Endothelial cell of umbilical vein (primary cell): ENCODE measurements at regions of chr5 and their contacts with region 1.

Region 1: DNA sequence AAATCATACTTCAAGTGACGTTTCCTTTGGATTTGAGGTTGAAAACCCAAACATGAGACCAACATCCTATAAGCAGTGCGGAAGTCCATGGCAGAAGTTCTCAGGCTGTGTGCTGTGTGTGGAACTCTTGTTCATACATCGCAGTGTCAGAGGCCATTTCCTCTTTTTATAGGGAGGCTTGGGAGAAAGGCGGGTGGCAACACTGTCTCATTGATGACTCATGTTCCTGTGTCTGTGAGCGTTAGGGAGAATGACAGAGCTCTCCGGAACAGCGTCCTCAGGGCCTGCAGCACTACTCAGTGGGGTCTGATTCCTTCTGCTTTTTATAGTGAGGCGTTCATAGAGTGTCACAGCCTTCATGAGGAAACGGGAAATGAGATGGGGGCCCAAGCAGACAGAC is 98.8 kb upstream of the BASP1 start:
- DNase-seq: peak; percentile 99
- H3K4me3 ChIP-seq: no peak overlapping the region
- H3K27ac ChIP-seq: peak overlapping the region; percentile 85
- H3K4me1 ChIP-seq: peaks cover 32% of the 10 kb centered on the region
- H3K27me3 ChIP-seq: no peaks in the 10 kb centered on the region
- CTCF ChIP-seq: no peak
- POLR2A ChIP-seq: peak; percentile 64

Region 2: DNA sequence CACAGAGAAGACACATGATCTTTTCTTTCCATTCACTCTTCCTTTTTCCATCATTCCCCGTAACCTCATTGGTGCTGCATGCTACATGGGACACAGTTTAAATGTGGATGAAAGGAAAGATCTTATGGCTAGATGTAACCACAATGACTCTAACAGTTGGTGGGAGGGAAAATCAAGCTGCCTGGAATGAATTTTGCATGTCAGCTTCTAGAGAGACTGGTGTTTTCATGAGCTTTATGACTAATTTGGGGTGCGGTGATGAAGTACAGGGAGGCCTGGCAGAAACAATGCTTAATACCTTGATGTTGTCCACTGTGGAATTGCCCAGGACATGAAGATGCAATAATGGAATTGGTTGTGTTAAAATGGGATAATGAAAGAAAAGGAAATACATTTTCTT is 126.6 kb before region 1 on chr5:
- CTCF ChIA-PET with region 1: no interaction called
- POLR2A ChIA-PET with region 1: no interaction called
- dilution Hi-C with region 1: no loop called
- intact Hi-C with region 1: loop called (anchors 1 kb)
- DNase-seq: peak; percentile 56
- H3K4me3 ChIP-seq: no peak overlapping the region
- H3K27ac ChIP-seq: peak overlapping the region; percentile 76
- H3K4me1 ChIP-seq: peaks cover 41% of the 10 kb centered on the region
- H3K27me3 ChIP-seq: no peaks in the 10 kb centered on the region
- CTCF ChIP-seq: no peak
- POLR2A ChIP-seq: no peak

Region 3: GRCh38 chr5:17037751-17038150 is 80.9 kb before region 1 on chr5:
- CTCF ChIA-PET with region 1: no interaction called
- POLR2A ChIA-PET with region 1: no interaction called
- dilution Hi-C with region 1: no loop called
- intact Hi-C with region 1: loop called (anchors 2 kb)
- DNase-seq: peak; percentile 85
- H3K4me3 ChIP-seq: no peak overlapping the region
- H3K27ac ChIP-seq: peak overlapping the region; percentile 81
- H3K4me1 ChIP-seq: peaks cover 19% of the 10 kb centered on the region
- H3K27me3 ChIP-seq: no peaks in the 10 kb centered on the region
- CTCF ChIP-seq: no peak
- POLR2A ChIP-seq: no peak

Region 4: DNA sequence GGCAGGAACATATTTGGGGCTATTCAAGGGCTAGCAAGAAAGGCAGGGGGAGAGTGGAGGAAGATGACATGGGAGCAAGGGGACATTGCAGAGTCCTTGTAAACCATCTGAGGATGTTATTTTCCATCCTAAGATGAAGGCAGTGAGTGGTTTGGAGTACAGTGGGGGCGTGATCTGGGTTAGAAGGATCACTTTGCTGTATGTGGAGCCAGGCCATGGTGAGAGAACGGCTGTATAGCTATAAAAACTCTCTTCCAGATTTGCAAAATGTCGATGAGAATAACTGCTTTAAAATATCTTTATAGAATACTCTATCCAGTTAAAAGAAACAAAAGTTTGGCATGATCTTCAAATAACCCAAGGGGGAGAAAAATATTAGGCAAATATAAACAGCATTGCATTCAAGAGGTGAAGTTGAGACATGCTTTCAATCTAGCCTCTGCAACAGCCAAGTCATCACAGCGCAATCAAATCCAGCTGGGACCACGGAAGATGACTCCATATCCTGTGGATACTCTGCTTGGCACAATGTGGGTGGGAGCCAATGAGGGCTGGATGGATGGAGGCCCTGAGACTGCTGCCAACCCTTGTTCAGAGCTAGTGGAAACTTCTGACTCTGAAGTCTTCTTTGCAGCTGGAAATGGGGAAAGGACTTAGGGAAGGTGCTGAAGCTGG is 12.8 kb before region 1 on chr5:
- CTCF ChIA-PET with region 1: interaction called, 7 read pairs
- POLR2A ChIA-PET with region 1: no interaction called
- dilution Hi-C with region 1: no loop called
- intact Hi-C with region 1: loop called (anchors 1 kb)
- DNase-seq: peak; percentile 82
- H3K4me3 ChIP-seq: no peak overlapping the region
- H3K27ac ChIP-seq: peak overlapping the region; percentile 27
- H3K4me1 ChIP-seq: peaks cover 13% of the 10 kb centered on the region
- H3K27me3 ChIP-seq: no peaks in the 10 kb centered on the region
- CTCF ChIP-seq: no peak
- POLR2A ChIP-seq: no peak

Region 5: DNA sequence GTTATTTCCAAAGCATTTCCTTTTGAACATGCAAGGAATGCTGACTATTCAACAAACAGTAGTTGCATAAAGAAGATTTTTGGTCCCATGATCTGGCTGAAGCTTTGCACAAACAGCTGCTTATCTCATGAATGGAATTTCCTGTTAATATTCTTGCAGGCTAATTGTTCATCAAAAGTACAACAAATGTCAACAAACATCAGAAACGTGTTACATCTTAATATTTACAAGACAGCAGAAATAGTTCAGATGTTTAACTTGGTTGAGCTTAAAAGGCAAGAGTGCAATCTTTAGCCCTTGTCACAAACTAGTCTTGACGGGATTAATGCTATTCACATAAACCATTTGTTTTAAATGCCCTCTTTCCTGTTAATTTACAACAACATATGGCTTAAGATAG is 50.9 kb after region 1 on chr5:
- CTCF ChIA-PET with region 1: no interaction called
- POLR2A ChIA-PET with region 1: no interaction called
- dilution Hi-C with region 1: no loop called
- intact Hi-C with region 1: loop called (anchors 1 kb)
- DNase-seq: peak; percentile 91
- H3K4me3 ChIP-seq: peak overlapping the region in 1 of 3 experiments; percentile 15
- H3K27ac ChIP-seq: peak overlapping the region; percentile 85
- H3K4me1 ChIP-seq: peaks cover 34% of the 10 kb centered on the region
- H3K27me3 ChIP-seq: no peaks in the 10 kb centered on the region
- CTCF ChIP-seq: no peak
- POLR2A ChIP-seq: peak; percentile 50